AG04449 (cell line): ENCODE measurements at regions of chr15 and their contacts with region 1.

Region 1: GRCh38 chr15:63752075-63752684 is 81.6 kb downstream of the HERC1 start:
- DNase-seq: peak; percentile 7
- H3K4me3 ChIP-seq: no peak overlapping the region
- CTCF ChIP-seq: peak; percentile 57

Region 2: DNA sequence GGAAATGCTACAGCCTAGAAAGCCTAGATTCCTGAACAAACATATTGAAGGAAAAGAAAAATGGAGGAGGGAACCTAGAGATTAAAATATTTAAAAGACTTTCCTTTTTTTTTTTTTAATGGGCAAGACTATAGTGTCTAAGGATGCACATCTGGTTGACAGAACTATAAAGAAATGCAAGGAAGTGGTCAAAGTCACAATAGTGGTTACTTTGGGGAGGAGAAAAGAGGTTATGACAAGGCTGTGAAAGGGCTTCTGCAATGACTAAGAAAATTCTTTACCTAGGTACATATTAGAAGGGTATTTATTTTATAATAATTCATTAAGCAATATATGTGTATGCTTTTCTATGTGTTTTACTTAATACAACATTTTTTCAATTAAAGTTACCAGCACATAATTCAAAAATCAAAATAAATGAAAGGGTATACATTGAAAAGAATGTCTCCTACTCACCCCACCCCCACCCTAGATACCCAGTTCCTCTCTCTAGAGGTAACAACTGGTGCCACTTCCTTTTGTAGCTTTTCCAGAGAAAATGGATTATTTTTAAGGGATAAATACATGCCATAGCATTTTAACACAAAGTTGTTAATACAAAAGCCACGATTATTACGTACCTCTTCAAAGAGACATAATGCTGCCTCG is 11.4 kb after region 1 on chr15:
- CTCF ChIA-PET with region 1: interaction called, 31 read pairs
- POLR2A ChIA-PET with region 1: no interaction called
- DNase-seq: no peak
- H3K4me3 ChIP-seq: no peak overlapping the region
- CTCF ChIP-seq: no peak

Region 3: DNA sequence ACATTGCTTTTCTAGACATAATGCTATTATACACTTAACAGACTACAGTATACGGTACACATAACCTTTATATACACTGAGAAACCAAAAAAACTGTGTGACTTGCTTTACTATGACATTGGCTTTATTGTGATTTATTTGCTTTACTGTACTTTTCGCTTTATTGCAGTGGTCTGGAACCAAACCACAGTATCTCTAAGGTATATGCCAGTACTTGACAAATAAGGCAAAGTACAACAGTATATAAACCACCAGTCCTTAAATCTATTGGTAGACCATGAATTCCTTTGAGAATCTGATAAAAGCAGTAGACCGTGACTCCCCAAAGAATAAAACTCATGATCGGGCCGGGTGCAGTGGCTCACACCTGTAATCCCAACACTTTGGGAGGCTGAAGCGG is 31.3 kb after region 1 on chr15:
- CTCF ChIA-PET with region 1: no interaction called
- POLR2A ChIA-PET with region 1: no interaction called
- DNase-seq: no peak
- H3K4me3 ChIP-seq: no peak overlapping the region
- CTCF ChIP-seq: no peak

Region 4: GRCh38 chr15:63818191-63818590 is 66.0 kb after region 1 on chr15:
- CTCF ChIA-PET with region 1: interaction called, 12 read pairs
- POLR2A ChIA-PET with region 1: no interaction called
- DNase-seq: no peak
- H3K4me3 ChIP-seq: no peak overlapping the region
- CTCF ChIP-seq: no peak

Region 5: GRCh38 chr15:63891079-63891767 is 139.0 kb after region 1 on chr15:
- CTCF ChIA-PET with region 1: interaction called, 120 read pairs
- POLR2A ChIA-PET with region 1: no interaction called
- DNase-seq: no peak
- H3K4me3 ChIP-seq: no peak overlapping the region
- CTCF ChIP-seq: peak; percentile 91

Region 6: GRCh38 chr15:63902671-63903035 is 150.5 kb after region 1 on chr15:
- CTCF ChIA-PET with region 1: no interaction called
- POLR2A ChIA-PET with region 1: no interaction called
- DNase-seq: no peak
- H3K4me3 ChIP-seq: no peak overlapping the region
- CTCF ChIP-seq: no peak

Region 7: DNA sequence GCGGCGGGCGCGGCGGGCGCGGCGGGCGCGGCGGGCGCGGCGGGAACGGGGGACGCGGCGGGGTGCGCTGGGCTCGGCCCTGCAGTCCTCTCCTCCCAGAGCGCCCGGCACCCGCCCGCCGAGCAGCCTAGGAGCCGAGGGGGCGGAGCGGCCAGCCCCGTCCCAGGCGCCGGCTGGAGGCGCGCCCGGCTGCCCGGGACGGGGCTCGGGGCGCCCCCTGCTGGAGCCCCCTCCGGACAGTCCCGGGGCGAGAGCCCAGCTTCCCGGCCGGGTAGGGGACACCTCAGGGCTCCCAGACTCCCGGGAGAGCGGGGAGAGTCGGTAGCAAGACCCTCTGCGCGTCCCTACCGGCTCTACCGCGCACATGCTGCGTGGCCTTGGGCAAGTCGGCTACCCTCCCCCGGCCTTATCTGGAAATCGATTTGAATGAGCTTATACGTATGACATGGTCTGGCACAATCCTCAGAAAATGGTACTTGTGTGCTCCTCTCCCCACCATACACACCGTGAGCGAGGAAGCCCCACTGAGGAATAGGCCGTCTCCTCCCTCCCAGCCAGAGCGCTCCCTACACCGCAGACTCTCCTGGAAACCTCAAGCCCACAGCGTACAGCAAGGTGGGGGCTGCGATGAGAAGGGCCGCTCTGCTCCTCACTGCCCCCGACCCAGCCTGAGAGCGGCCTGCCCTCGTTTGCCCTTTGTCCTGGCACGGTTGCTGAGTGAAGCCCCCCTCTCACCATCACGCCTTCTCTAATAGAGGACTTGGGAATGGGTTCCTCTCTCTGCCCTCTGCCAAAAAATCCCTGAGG is 294.4 kb after region 1 on chr15 and contains the start of gene DAPK2:
- CTCF ChIA-PET with region 1: interaction called, 49 read pairs
- POLR2A ChIA-PET with region 1: no interaction called
- DNase-seq: no peak
- H3K4me3 ChIP-seq: peak within 1 kb of the TSS; percentile 60
- CTCF ChIP-seq: peak; percentile 71